ENCODE measurements at regions of chr9 and their contacts with region 1.

Region 1: DNA sequence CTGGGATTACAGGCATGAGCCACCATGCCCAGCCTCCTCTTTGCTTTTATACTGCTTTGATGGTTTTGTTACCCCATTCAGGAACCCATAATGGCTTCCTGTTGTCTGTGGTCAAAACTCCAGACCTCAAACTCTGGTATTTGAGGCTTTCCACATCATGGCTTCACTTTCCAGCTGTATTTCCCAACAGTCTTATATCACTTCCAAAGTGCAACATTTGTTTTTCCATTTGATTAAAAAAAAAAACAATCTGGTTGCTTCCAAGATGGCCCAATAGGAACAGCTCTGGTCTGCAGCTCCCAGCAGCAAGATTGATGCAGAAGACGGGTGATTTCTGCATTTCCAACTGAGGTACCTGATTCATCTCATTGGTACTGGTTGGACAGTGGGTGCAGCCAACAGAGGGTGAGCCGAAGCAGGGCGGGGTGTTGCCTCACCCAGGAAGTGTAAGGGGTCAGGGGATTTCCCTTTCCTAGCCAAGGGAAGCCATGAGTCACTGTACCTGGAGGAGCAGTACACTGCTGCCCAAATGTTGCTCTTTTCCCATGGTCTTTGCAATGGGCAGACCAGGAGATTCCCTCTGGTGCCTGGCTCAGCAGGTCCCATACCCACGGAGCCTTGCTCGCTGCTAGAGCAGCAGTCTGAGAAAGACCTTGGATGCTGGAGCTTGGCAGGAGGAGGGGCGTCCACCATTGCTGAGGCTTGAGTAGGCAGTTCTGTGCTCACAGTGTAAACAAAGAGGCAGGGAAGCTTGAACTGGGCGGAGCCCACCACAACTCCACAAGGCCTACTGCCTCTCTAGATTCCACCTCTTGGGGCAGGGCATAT is 458.4 kb downstream of the KDM4C start:
- DNase-seq: peak; percentile 85
- H3K4me3 Mint-ChIP-seq: peak overlapping the region; percentile 45
- H3K27ac Mint-ChIP-seq: peak overlapping the region; percentile 62
- H3K4me1 Mint-ChIP-seq: peaks cover 18% of the 10 kb centered on the region
- H3K27me3 Mint-ChIP-seq: peaks cover 32% of the 10 kb centered on the region

Region 2: GRCh38 chr9:7298123-7298522 is 81.9 kb after region 1 on chr9:
- intact Hi-C with region 1: loop called (anchors 5 kb)
- DNase-seq: peak; percentile 64
- H3K4me3 Mint-ChIP-seq: no peak overlapping the region
- H3K27ac Mint-ChIP-seq: peak overlapping the region; percentile 4
- H3K4me1 Mint-ChIP-seq: peaks cover 9% of the 10 kb centered on the region
- H3K27me3 Mint-ChIP-seq: peaks cover 12% of the 10 kb centered on the region

Measured in activated CD4-positive, alpha-beta T cell treated with anti-CD3 and anti-CD28 coated beads, Interleukin-2, amount 10 ng/mL, durations not matched to agents 24 days and 14 days (primary cell).